Activated CD4-positive, alpha-beta memory T cell treated with anti-CD3 and anti-CD28 coated beads for 36 hours (primary cell): ENCODE measurements at regions of chr11 and their contacts with region 1.

Region 1: DNA sequence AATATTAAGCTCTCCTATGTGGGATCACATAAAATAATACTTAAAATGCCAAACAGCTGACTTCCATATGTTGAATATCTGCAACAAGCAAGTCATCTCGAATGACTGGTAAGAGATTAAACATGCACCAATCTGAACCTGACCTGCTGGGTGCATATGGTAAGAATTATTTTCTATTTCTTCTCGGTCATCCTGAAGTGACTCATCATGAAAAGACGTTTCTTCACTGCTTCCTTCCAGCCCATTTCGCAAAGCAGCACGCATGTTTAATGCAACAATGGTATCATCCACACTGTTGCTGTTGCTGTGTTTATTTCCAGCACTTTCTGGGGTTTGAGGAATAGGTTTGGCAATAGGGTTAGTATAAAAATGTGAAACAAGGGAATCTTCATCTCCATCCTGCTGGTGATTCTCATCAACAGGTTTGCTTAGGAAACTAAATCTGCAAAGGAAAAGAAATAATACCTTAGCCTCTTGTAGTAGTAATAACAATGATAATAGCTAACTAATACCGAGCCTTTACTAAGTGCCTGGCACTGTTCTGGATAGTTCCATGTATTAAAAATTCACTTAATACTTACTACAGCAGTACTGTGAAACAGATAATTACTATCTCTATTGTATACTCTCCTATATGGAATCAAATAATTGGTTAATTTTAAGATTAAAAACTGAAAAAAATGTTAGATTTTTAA is 52.0 kb upstream of the CHRNA10 start:
- DNase-seq: no peak
- H3K4me3 Mint-ChIP-seq: no peak overlapping the region
- H3K27ac Mint-ChIP-seq: no peak overlapping the region
- H3K4me1 Mint-ChIP-seq: no peaks in the 10 kb centered on the region
- H3K27me3 Mint-ChIP-seq: no peaks in the 10 kb centered on the region

Region 2: DNA sequence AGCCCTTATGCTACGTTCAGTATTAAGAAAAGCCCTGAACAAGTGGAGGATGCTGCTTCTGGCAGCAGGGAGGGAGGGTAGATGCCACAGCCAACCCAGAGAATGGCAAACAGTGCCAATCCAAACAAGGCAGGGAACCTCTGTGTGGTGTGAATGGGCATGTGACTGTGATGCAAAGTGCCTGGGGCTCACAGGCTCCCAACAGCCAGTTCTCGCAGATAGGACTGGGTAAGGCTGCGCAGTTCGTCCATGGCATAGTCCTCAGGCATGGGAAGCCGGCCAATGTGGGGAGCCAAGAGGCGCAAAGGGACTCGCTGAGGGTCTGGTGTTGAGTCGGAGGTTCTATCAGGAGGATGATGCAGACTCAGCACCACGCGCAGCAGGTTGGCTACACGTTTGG is 47.2 kb before region 1 on chr11:
- CTCF ChIA-PET with region 1: interaction called, 3 read pairs
- POLR2A ChIA-PET with region 1: no interaction called
- intact Hi-C with region 1: loop called (anchors 5 kb)
- DNase-seq: no peak
- H3K4me3 Mint-ChIP-seq: no peak overlapping the region
- H3K27ac Mint-ChIP-seq: no peak overlapping the region
- H3K4me1 Mint-ChIP-seq: no peaks in the 10 kb centered on the region
- H3K27me3 Mint-ChIP-seq: no peaks in the 10 kb centered on the region

Region 3: GRCh38 chr11:3854977-3855807 is 132.0 kb after region 1 on chr11 and contains the start of gene STIM1:
- CTCF ChIA-PET with region 1: no interaction called
- POLR2A ChIA-PET with region 1: no interaction called
- intact Hi-C with region 1: no loop called
- DNase-seq: peak; percentile 99
- H3K4me3 Mint-ChIP-seq: peak within 1 kb of the TSS; percentile 85
- H3K27ac Mint-ChIP-seq: peak within 1 kb of the TSS; percentile 99
- H3K4me1 Mint-ChIP-seq: peaks cover 53% of the 10 kb centered on the region
- H3K27me3 Mint-ChIP-seq: no peaks in the 10 kb centered on the region
- total RNA-seq, gene STIM1: 55.9 to 61.1 TPM